GM12878 (cell line): ENCODE measurements at regions of chr9 and their contacts with region 1.

Region 1: DNA sequence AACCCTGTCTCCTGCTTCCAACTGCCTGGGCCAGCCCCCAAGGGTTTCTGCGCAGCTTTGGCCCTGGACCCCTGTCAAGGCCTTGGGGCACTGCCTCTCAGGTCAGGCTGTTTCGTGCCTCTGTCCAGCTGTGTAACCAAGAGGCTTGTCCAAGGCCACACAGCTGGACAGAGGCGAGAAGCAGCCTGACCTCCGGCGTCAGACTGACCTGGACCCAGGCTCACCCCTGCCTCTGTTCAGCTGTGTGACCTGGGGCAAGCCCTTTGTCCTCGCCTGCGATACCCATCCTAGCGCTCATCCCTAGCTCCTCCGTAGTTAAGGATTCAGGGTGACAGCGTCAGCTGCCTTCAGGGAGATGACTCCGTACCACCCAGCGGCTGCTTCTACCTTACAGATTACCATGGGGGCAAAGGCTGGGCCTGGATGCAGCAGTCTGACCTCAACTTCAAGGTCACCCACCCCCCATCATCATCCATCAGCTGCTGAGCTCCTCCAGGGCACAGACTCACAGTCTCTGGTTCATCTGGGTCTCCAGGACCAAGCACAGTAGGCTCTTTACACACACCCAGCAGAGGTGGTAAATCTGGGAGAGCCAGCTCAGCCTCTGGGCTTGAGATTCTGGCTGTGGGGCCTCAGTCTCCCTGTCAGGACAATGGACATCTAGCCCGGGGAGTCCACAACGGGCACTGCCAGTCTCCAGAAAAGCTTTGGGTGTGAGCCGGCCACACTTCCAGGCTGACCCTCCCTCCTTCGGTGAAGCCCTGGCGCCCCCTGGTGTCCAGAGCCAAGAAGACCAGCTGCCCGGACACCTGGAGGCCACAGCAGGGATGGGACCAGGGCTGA is 7.9 kb downstream of the AK1 start:
- DNase-seq: no peak
- ATAC-seq: peak; percentile 96
- H3K4me3 ChIP-seq: no peak overlapping the region
- H3K27ac ChIP-seq: no peak overlapping the region
- H3K4me1 ChIP-seq: peaks cover 22% of the 10 kb centered on the region
- H3K27me3 ChIP-seq: no peaks in the 10 kb centered on the region
- CTCF ChIP-seq: peak; percentile 87 to 98 (median 91)
- EP300 ChIP-seq: no peak
- POLR2A ChIP-seq: no peak
- RAD21 ChIP-seq: peak; percentile 99

Region 2: GRCh38 chr9:127503947-127504782 is 365.4 kb before region 1 on chr9:
- CTCF ChIA-PET with region 1: interaction called, 4 read pairs
- POLR2A ChIA-PET with region 1: no interaction called
- RAD21 ChIA-PET with region 1: interaction called, 3 read pairs
- SMC1A ChIA-PET with region 1: no interaction called
- in situ Hi-C with region 1: no loop called
- intact Hi-C with region 1: loop called (anchors 2 kb)
- DNase-seq: no peak
- ATAC-seq: peak; percentile 89
- H3K4me3 ChIP-seq: no peak overlapping the region
- H3K27ac ChIP-seq: no peak overlapping the region
- H3K4me1 ChIP-seq: no peaks in the 10 kb centered on the region
- H3K27me3 ChIP-seq: no peaks in the 10 kb centered on the region
- CTCF ChIP-seq: peak; percentile 84 to 94 (median 93)
- EP300 ChIP-seq: no peak
- POLR2A ChIP-seq: no peak
- RAD21 ChIP-seq: peak; percentile 82

Region 3: GRCh38 chr9:127763918-127764384 is 105.6 kb before region 1 on chr9:
- CTCF ChIA-PET with region 1: interaction called, 23 read pairs
- POLR2A ChIA-PET with region 1: no interaction called
- RAD21 ChIA-PET with region 1: interaction called, 15 read pairs
- SMC1A ChIA-PET with region 1: interaction called, 7 read pairs
- in situ Hi-C with region 1: no loop called
- intact Hi-C with region 1: no loop called
- DNase-seq: no peak
- ATAC-seq: peak; percentile 78
- H3K4me3 ChIP-seq: no peak overlapping the region
- H3K27ac ChIP-seq: no peak overlapping the region
- H3K4me1 ChIP-seq: peaks cover 7% of the 10 kb centered on the region
- H3K27me3 ChIP-seq: no peaks in the 10 kb centered on the region
- CTCF ChIP-seq: peak; percentile 31 to 47 (median 45); a peak in 5 of 6 replicates
- EP300 ChIP-seq: no peak
- POLR2A ChIP-seq: no peak
- RAD21 ChIP-seq: peak; percentile 46

Region 4: DNA sequence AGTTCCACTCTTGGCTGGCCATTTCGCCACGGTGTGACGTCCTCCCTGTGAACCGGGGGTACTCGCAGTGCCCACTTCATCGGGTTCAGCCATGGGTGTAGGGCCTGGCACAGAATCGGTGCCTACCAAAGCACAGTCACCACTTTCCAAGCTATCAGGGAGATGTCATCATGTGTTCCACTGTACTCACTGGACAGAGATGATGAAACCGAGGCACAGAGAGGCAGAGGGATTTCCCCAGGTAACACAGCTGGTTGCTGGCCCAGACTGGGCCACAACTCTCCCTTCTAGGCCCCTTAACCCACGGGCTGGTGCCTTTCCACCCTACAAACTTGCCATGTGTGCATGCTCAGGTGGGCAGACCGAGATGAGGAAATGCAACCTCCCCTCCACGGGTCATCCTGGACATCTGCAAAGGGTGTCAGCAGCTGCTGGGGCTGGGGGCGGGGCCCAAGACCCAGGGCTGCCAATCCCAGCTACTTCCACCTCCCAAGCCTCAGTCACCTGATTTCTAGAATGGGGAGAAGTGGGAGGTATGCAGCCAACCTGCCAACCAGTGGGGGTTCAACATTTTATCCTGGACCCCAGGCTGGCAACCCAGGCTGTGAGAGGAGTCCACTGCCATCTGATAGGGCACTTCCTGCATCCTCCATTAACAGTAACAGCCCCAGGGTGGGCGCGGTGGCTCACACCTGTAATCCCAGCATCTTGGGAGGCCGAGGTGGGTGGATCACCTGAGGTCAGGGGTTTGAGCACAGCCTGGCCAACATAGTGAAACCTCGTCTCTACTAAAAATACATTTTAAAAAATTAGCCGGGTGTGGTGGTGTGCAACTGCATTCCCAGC is 90.2 kb before region 1 on chr9:
- CTCF ChIA-PET with region 1: interaction called, 23 read pairs
- POLR2A ChIA-PET with region 1: interaction called, 7 read pairs
- RAD21 ChIA-PET with region 1: interaction called, 10 read pairs
- SMC1A ChIA-PET with region 1: interaction called, 9 read pairs
- in situ Hi-C with region 1: no loop called
- intact Hi-C with region 1: no loop called
- DNase-seq: peak; percentile 79
- ATAC-seq: peak; percentile 62
- H3K4me3 ChIP-seq: peak overlapping the region; percentile 100
- H3K27ac ChIP-seq: peak overlapping the region; percentile 93
- H3K4me1 ChIP-seq: peaks cover 44% of the 10 kb centered on the region
- H3K27me3 ChIP-seq: no peaks in the 10 kb centered on the region
- CTCF ChIP-seq: no peak
- EP300 ChIP-seq: peak in 1 of 2 experiments; percentile 23; a peak in 1 of 4 replicates
- POLR2A ChIP-seq: peak; percentile 50; the same call in 1 of the 2 replicates
- RAD21 ChIP-seq: no peak

Region 5: DNA sequence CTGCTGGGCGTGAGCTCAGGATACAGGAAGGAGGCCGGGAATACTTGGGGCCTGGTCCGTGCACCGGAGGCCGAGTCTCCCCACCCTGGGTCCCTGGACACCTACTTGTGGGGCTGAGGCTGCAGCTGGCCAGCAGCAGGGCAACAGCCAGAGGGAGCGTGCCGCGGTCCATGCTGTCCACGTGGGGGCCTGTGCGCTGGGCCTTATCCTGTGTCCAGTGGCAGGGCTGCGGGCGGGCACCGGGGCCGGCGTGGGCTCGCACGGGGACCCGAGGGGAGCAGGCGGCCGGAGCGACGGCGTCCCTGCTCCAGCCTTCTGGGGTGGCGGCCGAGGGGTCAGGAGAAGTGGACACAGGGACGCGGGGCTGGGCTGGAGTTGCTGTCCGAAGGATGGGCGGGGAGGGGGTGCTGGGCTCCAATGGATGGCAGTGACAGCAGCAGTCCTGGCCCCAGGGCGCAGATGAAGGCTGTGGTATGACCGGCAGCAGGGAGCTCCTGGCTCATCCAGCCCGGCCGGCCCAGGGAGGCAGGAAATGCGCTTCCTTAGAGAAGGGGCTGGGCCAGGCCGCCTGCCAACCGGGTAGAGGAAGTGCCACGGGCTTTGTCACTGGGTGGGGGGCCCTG is 15.2 kb before region 1 on chr9 and contains the start of gene ENG:
- CTCF ChIA-PET with region 1: interaction called, 16 read pairs
- POLR2A ChIA-PET with region 1: interaction called, 6 read pairs
- RAD21 ChIA-PET with region 1: interaction called, 4 read pairs
- SMC1A ChIA-PET with region 1: interaction called, 4 read pairs
- in situ Hi-C with region 1: no loop called
- intact Hi-C with region 1: no loop called
- DNase-seq: no peak
- ATAC-seq: peak; percentile 69
- H3K4me3 ChIP-seq: peak within 1 kb of the TSS; percentile 78
- H3K27ac ChIP-seq: peak within 1 kb of the TSS; percentile 45
- H3K4me1 ChIP-seq: peaks cover 6% of the 10 kb centered on the region
- H3K27me3 ChIP-seq: no peaks in the 10 kb centered on the region
- CTCF ChIP-seq: no peak
- EP300 ChIP-seq: no peak
- POLR2A ChIP-seq: no peak
- RAD21 ChIP-seq: no peak
- polyA plus RNA-seq, gene ENG: 0.14 to 0.24 TPM

Region 6: GRCh38 chr9:127980706-127981558 is 111.4 kb after region 1 on chr9 and contains the start of gene EEIG1:
- CTCF ChIA-PET with region 1: no interaction called
- POLR2A ChIA-PET with region 1: no interaction called
- RAD21 ChIA-PET with region 1: no interaction called
- SMC1A ChIA-PET with region 1: no interaction called
- in situ Hi-C with region 1: no loop called
- intact Hi-C with region 1: no loop called
- DNase-seq: no peak
- ATAC-seq: peak; percentile 88
- H3K4me3 ChIP-seq: peak within 1 kb of the TSS; percentile 93
- H3K27ac ChIP-seq: peak within 1 kb of the TSS; percentile 76
- H3K4me1 ChIP-seq: peaks cover 53% of the 10 kb centered on the region
- H3K27me3 ChIP-seq: no peaks in the 10 kb centered on the region
- CTCF ChIP-seq: no peak
- EP300 ChIP-seq: no peak
- POLR2A ChIP-seq: peak; percentile 91
- RAD21 ChIP-seq: no peak
- polyA plus RNA-seq, gene EEIG1: 1.2 to 2.7 TPM

Region 7: GRCh38 chr9:128048663-128049062 is 179.1 kb after region 1 on chr9:
- CTCF ChIA-PET with region 1: no interaction called
- POLR2A ChIA-PET with region 1: interaction called, 10 read pairs
- RAD21 ChIA-PET with region 1: no interaction called
- SMC1A ChIA-PET with region 1: no interaction called
- in situ Hi-C with region 1: no loop called
- intact Hi-C with region 1: no loop called
- DNase-seq: no peak
- ATAC-seq: peak; percentile 93
- H3K4me3 ChIP-seq: no peak overlapping the region
- H3K27ac ChIP-seq: no peak overlapping the region
- H3K4me1 ChIP-seq: no peaks in the 10 kb centered on the region
- H3K27me3 ChIP-seq: no peaks in the 10 kb centered on the region; a peak in 2 of 4 replicates
- CTCF ChIP-seq: no peak
- EP300 ChIP-seq: no peak
- POLR2A ChIP-seq: no peak
- RAD21 ChIP-seq: no peak